Sigmoid colon (tissue), 7 donors: ENCODE measurements at regions of chr9 and their contacts with region 1.

Region 1: DNA sequence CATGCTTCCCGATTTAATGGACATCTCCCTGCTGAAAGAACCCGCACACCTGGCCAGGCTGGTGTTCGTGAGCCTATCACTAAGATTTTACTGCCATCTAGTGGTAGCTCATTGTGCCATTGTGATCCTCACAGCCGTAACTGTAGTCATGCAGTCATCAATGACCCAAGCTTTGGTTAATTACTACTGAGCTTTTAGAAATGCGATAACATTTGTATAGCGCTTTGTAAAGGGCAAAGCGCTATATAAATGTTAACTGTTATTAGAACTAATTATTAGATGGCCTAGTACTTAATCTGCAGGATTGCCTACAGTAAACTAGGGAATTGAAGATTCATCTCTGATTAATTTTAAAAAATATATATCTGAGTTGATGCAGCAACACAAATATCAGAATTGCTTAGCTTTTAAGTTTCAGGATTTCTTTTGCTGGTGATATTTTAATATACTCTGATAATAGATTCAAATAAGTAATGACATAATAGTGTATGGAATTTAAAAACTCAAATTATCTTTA is 90.2 kb downstream of the HACD4 start:
- DNase-seq: peak; percentile 76
- H3K4me3 ChIP-seq: no peak overlapping the region
- H3K27ac ChIP-seq: no peak overlapping the region
- H3K4me1 ChIP-seq: peaks cover 0 to 11% (median 1%) of the 10 kb centered on the region in 4 donors
- H3K27me3 ChIP-seq: no peaks in the 10 kb centered on the region
- CTCF ChIP-seq: peak; percentile 67 to 82 (median 75)
- EP300 ChIP-seq: no peak
- POLR2A ChIP-seq: no peak

Region 2: GRCh38 chr9:20558566-20559016 is 382.6 kb before region 1 on chr9:
- intact Hi-C with region 1: loop called (anchors 10 kb)
- DNase-seq: no peak
- H3K4me3 ChIP-seq: no peak overlapping the region
- H3K27ac ChIP-seq: peak overlapping the region; percentile 7 to 70 (median 60)
- H3K4me1 ChIP-seq: peaks cover 2 to 79% (median 68%) of the 10 kb centered on the region in 4 donors
- H3K27me3 ChIP-seq: no peaks in the 10 kb centered on the region
- CTCF ChIP-seq: no peak
- EP300 ChIP-seq: no peak
- POLR2A ChIP-seq: no peak

Region 3: GRCh38 chr9:21110708-21111576 is 169.7 kb after region 1 on chr9:
- intact Hi-C with region 1: loop called (anchors 5 kb)
- DNase-seq: no peak
- H3K4me3 ChIP-seq: no peak overlapping the region
- H3K27ac ChIP-seq: no peak overlapping the region
- H3K4me1 ChIP-seq: no peaks in the 10 kb centered on the region
- H3K27me3 ChIP-seq: no peaks in the 10 kb centered on the region
- CTCF ChIP-seq: peak; percentile 43 to 84 (median 68)
- EP300 ChIP-seq: no peak
- POLR2A ChIP-seq: no peak